OCI-LY7 (cell line): ENCODE measurements at regions of chr7 and their contacts with region 1.

Region 1: DNA sequence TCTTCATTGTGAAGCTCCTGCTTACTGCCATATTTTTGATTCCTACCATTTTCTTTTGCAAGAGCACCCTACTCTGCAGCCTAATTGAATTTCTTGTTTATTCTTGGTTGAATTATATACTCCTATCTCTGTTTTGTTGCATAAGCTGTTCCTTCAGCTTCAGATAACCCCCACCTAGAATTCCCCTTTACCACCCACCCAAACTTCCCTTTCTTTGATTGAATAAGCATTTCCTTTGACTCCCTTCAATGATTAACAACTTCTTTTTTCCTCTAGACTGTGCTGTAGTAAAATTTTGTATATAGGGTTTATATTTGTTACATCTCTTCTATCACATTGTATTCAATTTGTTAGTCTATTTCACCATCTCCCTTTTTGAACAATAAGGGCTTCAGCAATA is 168.1 kb downstream of the GPR37 start:
- DNase-seq: no peak
- H3K4me3 ChIP-seq: no peak overlapping the region
- H3K27ac ChIP-seq: no peak overlapping the region
- H3K4me1 ChIP-seq: no peaks in the 10 kb centered on the region
- CTCF ChIP-seq: no peak

Region 2: DNA sequence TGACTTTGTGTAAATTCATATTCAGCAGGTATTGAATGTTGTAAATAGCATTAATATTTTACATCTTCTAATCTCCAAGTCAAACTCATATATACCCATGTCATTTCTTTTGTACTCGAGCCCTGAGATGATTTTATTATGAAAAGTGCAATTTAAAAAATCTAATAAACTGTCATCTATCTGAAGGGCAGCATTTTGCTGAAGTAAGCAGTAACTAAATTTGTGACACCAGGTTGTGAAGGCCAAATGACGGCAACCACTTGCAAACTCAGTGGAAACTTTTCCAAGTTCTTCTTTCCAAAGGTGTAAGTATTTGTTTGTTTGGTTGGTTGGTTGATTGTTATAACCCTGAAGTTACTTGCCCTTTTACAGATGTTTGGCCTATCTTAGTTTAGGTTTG is 20.3 kb before region 1 on chr7:
- CTCF ChIA-PET with region 1: no interaction called
- POLR2A ChIA-PET with region 1: interaction called, 12 read pairs
- intact Hi-C with region 1: no loop called
- DNase-seq: no peak
- H3K4me3 ChIP-seq: no peak overlapping the region
- H3K27ac ChIP-seq: no peak overlapping the region
- H3K4me1 ChIP-seq: no peaks in the 10 kb centered on the region
- CTCF ChIP-seq: no peak

Region 3: DNA sequence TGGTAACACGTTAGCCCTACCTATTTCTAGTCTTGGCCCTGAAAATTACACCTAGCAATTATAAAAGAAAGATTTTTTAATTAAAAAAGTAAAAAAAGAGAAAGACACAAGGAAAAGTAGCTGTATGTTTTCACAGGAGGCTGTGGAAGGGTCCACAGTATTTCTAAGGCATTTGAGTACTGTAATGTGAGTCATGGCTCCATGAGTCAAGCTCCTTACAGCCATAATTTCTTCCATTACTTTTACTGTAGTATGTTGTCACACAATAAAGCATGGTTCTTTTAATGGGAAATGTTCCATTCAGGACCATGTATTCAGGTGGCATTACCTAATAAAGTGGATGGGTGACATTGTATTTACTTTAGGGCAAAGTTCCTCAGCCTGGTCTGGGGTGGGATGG is 54.7 kb after region 1 on chr7:
- CTCF ChIA-PET with region 1: no interaction called
- POLR2A ChIA-PET with region 1: no interaction called
- intact Hi-C with region 1: no loop called
- DNase-seq: no peak
- H3K4me3 ChIP-seq: no peak overlapping the region
- H3K27ac ChIP-seq: no peak overlapping the region
- H3K4me1 ChIP-seq: no peaks in the 10 kb centered on the region
- CTCF ChIP-seq: no peak